Activated CD8-positive, alpha-beta T cell treated with anti-CD3 and anti-CD28 coated beads for 36 hours (primary cell): ENCODE measurements at regions of chr17 and their contacts with region 1.

Region 1: DNA sequence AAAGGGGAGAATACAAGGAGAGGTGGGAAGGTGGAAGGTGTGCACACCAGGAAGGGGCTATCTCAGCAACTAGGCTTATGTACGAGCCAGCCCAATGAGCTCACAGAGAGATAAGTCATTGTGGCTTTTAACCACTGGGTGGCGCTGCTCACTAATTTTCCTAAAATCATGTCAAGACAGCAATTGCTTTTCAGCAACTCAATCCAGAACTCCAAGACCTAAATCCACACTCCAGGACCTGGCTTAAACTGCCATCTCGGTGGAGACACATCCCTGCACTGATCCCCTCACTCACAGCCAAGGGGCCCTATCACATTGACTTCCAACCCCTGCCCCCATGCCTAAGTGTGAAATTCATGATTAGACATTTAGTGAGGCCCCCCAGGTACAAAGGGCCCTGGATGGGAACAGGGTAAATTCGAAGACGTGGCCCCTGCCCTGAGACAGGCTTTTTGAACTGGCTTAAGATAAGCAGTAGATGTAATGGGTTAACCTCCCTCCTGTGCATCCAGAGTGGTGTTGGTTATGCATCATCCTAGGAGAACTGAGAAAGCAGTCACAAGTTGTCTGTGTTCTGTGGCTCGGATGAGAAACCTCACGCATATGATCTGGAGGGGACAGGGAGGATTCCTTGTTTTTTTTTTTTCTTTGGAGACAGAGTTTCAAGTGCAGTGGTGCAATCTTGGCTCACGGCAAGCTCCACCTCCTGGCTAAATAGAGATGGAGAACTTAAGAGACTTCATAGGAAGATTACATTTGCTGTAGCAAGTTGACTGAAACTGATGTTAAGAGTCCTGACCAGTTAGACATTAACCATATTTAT is 11.5 kb downstream of the CCL16 start:
- DNase-seq: peak; percentile 89
- ATAC-seq: peak; percentile 81
- H3K4me3 Mint-ChIP-seq: no peak overlapping the region
- H3K27ac Mint-ChIP-seq: no peak overlapping the region
- H3K4me1 Mint-ChIP-seq: no peaks in the 10 kb centered on the region
- H3K27me3 Mint-ChIP-seq: no peaks in the 10 kb centered on the region
- CTCF ChIP-seq: peak; percentile 85

Region 2: DNA sequence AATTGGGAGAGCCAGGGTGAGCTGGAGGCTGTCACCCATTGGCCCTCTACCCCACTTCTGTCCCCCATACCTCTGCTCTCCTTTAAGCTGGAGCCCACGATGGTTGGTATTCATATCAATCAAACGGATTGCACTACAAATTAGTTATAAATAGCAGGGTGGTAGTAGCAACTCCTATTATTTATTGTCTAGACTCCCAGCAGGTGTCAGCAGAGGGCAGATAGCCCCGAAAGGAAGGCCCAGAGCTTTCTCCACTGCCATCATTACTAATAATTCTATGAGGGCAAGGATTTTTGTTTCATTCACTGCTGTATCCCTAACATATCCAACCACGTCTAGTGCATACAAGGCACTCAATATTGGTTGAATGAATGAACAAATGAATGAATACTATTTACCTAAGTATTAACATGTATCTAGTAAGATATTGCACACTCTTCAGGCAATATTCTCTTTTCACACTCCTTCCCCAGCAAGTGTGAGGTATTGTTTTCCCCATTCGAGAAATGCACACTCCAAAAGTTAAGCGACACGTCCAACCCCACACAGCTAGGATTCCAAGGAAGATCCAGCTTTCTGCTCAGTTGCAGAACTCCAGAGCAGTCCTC is 202.8 kb before region 1 on chr17:
- CTCF ChIA-PET with region 1: no interaction called
- POLR2A ChIA-PET with region 1: no interaction called
- intact Hi-C with region 1: no loop called
- DNase-seq: peak; percentile 44
- ATAC-seq: no peak
- H3K4me3 Mint-ChIP-seq: no peak overlapping the region
- H3K27ac Mint-ChIP-seq: no peak overlapping the region
- H3K4me1 Mint-ChIP-seq: peaks cover 10% of the 10 kb centered on the region
- H3K27me3 Mint-ChIP-seq: no peaks in the 10 kb centered on the region
- CTCF ChIP-seq: peak; percentile 36

Region 3: DNA sequence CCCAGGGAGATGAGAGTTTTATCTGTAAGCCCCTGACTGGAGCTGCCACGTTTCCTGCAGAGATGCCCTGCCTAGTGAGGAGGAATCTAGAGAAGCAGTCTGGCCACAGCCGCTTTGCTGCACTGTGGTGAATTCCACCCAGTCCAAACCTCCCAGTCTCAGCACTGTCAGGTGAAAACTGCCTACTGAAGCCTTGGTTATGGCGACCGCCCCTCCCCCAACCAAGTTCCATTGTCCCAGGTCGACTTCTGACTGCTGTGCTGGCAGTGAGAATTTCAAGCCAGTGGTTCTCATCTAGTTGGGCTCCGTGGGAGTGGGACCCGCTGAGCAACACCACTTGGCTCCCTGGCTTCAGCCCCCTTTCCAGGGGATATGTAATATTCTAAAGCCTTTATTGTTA is 16.0 kb before region 1 on chr17:
- CTCF ChIA-PET with region 1: interaction called, 30 read pairs
- POLR2A ChIA-PET with region 1: no interaction called
- intact Hi-C with region 1: no loop called
- DNase-seq: no peak
- ATAC-seq: no peak
- H3K4me3 Mint-ChIP-seq: no peak overlapping the region
- H3K27ac Mint-ChIP-seq: no peak overlapping the region
- H3K4me1 Mint-ChIP-seq: no peaks in the 10 kb centered on the region
- H3K27me3 Mint-ChIP-seq: peaks cover 7% of the 10 kb centered on the region
- CTCF ChIP-seq: no peak

Region 4: DNA sequence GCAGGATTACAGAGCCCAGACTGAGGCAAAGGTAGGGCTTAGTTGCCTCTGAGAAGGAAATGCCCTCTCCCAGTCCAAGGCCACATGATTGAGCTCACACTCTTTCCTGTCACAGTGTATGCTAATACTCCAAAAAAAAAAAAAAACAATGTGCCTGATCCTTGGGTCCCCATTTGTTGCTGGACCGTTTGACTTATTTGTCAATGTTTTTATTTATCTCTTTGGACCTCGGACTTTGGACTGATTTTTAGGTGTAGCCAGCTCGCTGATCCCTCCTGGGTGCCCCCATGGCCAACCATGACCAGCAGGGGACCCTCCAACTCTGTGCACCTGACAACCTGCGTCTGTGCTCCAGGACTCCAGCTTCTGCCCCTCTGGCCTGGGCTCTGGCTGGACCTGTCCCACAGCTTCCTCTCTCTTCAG is 12.2 kb after region 1 on chr17:
- CTCF ChIA-PET with region 1: interaction called, 21 read pairs
- POLR2A ChIA-PET with region 1: no interaction called
- intact Hi-C with region 1: no loop called
- DNase-seq: peak; percentile 30
- ATAC-seq: no peak
- H3K4me3 Mint-ChIP-seq: no peak overlapping the region
- H3K27ac Mint-ChIP-seq: no peak overlapping the region
- H3K4me1 Mint-ChIP-seq: no peaks in the 10 kb centered on the region
- H3K27me3 Mint-ChIP-seq: no peaks in the 10 kb centered on the region
- CTCF ChIP-seq: peak; percentile 41

Region 5: DNA sequence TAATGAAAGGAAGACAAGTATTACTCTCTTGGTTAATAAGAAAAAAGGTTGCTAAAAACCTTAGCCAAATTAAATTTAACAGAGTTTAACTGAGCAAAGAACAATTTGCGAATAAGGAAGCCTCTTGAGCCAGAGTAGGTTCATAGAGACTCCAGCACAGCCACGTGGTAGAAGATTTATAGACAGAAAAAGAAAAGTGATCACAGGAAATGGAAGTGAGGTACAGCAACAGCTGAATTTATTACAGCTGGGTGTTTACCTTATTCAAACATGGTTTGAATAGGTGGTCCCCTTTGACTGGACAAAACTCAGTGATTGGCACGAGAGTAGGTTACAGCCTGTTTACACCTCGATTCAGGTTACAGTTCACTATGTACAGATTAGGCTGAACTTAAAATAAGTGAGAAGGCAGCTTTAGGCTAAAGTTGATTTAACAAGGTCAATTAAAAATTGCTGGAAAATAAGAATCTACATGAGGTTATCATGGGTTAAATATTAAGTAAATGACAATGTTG is 34.9 kb after region 1 on chr17:
- CTCF ChIA-PET with region 1: interaction called, 17 read pairs
- POLR2A ChIA-PET with region 1: no interaction called
- intact Hi-C with region 1: no loop called
- DNase-seq: no peak
- ATAC-seq: no peak
- H3K4me3 Mint-ChIP-seq: no peak overlapping the region
- H3K27ac Mint-ChIP-seq: no peak overlapping the region
- H3K4me1 Mint-ChIP-seq: peaks cover 8% of the 10 kb centered on the region
- H3K27me3 Mint-ChIP-seq: no peaks in the 10 kb centered on the region
- CTCF ChIP-seq: no peak